T-cell (primary cell): ENCODE measurements at regions of chr6 and their contacts with region 1.

Region 1: GRCh38 chr6:52263709-52264540 is 19.6 kb upstream of the IL17F start:
- DNase-seq: peak; percentile 32 to 81 (median 60)
- ATAC-seq: peak; percentile 74 to 82 (median 80)
- H3K4me3 ChIP-seq: no peak overlapping the region
- H3K4me3 Mint-ChIP-seq: no peak overlapping the region
- H3K27ac ChIP-seq: no peak overlapping the region
- H3K27ac Mint-ChIP-seq: peak overlapping the region in 1 of 2 donors; percentile 34
- H3K4me1 ChIP-seq: peaks cover 0 to 7% of the 10 kb centered on the region in 2 experiments
- H3K4me1 Mint-ChIP-seq: peaks cover 7 to 13% (median 12%) of the 10 kb centered on the region in 3 donors
- H3K27me3 ChIP-seq: no peaks in the 10 kb centered on the region
- H3K27me3 Mint-ChIP-seq: no peaks in the 10 kb centered on the region

Region 2: GRCh38 chr6:51913265-51913664 is 350.7 kb before region 1 on chr6:
- CTCF ChIA-PET with region 1: interaction called in 1 of 2 experiments, 10 read pairs
- POLR2A ChIA-PET with region 1: no interaction called
- DNase-seq: no peak
- ATAC-seq: no peak
- H3K4me3 ChIP-seq: no peak overlapping the region
- H3K4me3 Mint-ChIP-seq: no peak overlapping the region
- H3K27ac ChIP-seq: no peak overlapping the region
- H3K27ac Mint-ChIP-seq: no peak overlapping the region
- H3K4me1 ChIP-seq: no peaks in the 10 kb centered on the region
- H3K4me1 Mint-ChIP-seq: no peaks in the 10 kb centered on the region
- H3K27me3 ChIP-seq: no peaks in the 10 kb centered on the region
- H3K27me3 Mint-ChIP-seq: peaks cover 4 to 33% of the 10 kb centered on the region in 2 donors

Region 3: GRCh38 chr6:52162940-52163908 is 100.7 kb before region 1 on chr6:
- CTCF ChIA-PET with region 1: interaction called, 7 to 17 read pairs
- POLR2A ChIA-PET with region 1: no interaction called
- DNase-seq: peak in 1 of 35 experiments; percentile 61
- ATAC-seq: peak in 3 of 4 experiments; percentile 51 to 63 (median 52)
- H3K4me3 ChIP-seq: no peak overlapping the region
- H3K4me3 Mint-ChIP-seq: no peak overlapping the region
- H3K27ac ChIP-seq: no peak overlapping the region
- H3K27ac Mint-ChIP-seq: no peak overlapping the region
- H3K4me1 ChIP-seq: no peaks in the 10 kb centered on the region
- H3K4me1 Mint-ChIP-seq: peaks cover 0 to 2% (median 0%) of the 10 kb centered on the region in 3 donors
- H3K27me3 ChIP-seq: peaks cover 0 to 6% of the 10 kb centered on the region in 2 experiments
- H3K27me3 Mint-ChIP-seq: peaks cover 11 to 21% of the 10 kb centered on the region in 2 donors

Region 4: DNA sequence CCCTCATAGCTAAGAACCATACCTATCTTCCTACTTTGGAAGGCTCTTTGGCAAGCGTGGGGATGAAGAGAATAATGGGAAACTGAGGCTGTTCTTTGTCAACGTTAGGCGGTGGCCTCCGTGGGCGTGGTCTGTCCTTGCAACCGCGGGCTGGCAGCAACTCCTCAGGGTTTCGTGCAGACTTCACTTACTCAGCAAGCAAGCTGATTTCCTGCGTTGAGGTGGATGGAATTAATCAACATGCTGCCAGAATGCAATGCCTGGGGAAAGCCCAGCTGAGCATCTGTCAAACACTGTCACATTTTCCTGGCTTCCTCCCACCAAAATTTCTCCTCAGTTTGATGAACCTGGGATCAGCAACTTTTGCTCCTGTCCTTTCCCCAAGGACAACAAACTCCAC is 10.4 kb before region 1 on chr6:
- CTCF ChIA-PET with region 1: interaction called, 4 to 13 read pairs
- POLR2A ChIA-PET with region 1: no interaction called
- DNase-seq: peak in 1 of 35 experiments; percentile 6
- ATAC-seq: no peak
- H3K4me3 ChIP-seq: no peak overlapping the region
- H3K4me3 Mint-ChIP-seq: no peak overlapping the region
- H3K27ac ChIP-seq: no peak overlapping the region
- H3K27ac Mint-ChIP-seq: no peak overlapping the region
- H3K4me1 ChIP-seq: no peaks in the 10 kb centered on the region
- H3K4me1 Mint-ChIP-seq: peaks cover 0 to 6% (median 4%) of the 10 kb centered on the region in 3 donors
- H3K27me3 ChIP-seq: peaks cover 2 to 9% of the 10 kb centered on the region in 2 experiments
- H3K27me3 Mint-ChIP-seq: peaks cover 15 to 38% of the 10 kb centered on the region in 2 donors

Region 5: DNA sequence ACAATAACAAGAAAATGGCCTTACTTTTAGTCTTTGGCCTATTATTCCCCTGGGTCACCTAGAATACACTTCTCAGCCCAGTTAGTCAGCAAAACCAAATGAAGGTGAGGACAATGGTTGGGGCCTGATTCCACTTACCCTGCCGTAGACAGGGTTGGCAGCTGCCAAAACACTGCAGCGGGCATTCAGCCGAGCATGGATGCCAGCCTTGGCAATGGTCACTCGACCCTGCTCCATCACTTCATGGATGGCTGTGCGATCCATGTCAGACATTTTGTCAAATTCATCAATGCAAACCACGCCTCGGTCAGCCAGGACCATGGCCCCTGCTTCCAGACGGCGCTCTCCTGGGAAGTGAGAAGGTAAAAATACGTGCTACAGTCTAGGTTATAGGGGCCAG is 12.2 kb after region 1 on chr6:
- CTCF ChIA-PET with region 1: interaction called, 3 to 12 read pairs
- POLR2A ChIA-PET with region 1: no interaction called
- DNase-seq: no peak
- ATAC-seq: no peak
- H3K4me3 ChIP-seq: no peak overlapping the region
- H3K4me3 Mint-ChIP-seq: no peak overlapping the region
- H3K27ac ChIP-seq: no peak overlapping the region
- H3K27ac Mint-ChIP-seq: no peak overlapping the region
- H3K4me1 ChIP-seq: no peaks in the 10 kb centered on the region
- H3K4me1 Mint-ChIP-seq: peaks cover 0 to 11% (median 6%) of the 10 kb centered on the region in 3 donors
- H3K27me3 ChIP-seq: no peaks in the 10 kb centered on the region
- H3K27me3 Mint-ChIP-seq: no peaks in the 10 kb centered on the region

Region 6: GRCh38 chr6:52426680-52427079 is 162.8 kb after region 1 on chr6:
- CTCF ChIA-PET with region 1: no interaction called
- POLR2A ChIA-PET with region 1: no interaction called
- DNase-seq: no peak
- ATAC-seq: no peak
- H3K4me3 ChIP-seq: no peak overlapping the region
- H3K4me3 Mint-ChIP-seq: no peak overlapping the region
- H3K27ac ChIP-seq: no peak overlapping the region
- H3K27ac Mint-ChIP-seq: no peak overlapping the region
- H3K4me1 ChIP-seq: no peaks in the 10 kb centered on the region
- H3K4me1 Mint-ChIP-seq: peaks cover 2 to 7% (median 4%) of the 10 kb centered on the region in 3 donors
- H3K27me3 ChIP-seq: no peaks in the 10 kb centered on the region
- H3K27me3 Mint-ChIP-seq: no peaks in the 10 kb centered on the region